ENCODE measurements at regions of chr9 and their contacts with region 1.

Region 1: GRCh38 chr9:121744002-121744686 is 92.7 kb downstream of the DAB2IP start:
- DNase-seq: no peak
- H3K4me3 ChIP-seq: peak overlapping the region; percentile 42
- CTCF ChIP-seq: peak; percentile 46

Region 2: GRCh38 chr9:121707477-121708424 is 36.4 kb before region 1 on chr9:
- CTCF ChIA-PET with region 1: no interaction called
- POLR2A ChIA-PET with region 1: no interaction called
- DNase-seq: no peak
- H3K4me3 ChIP-seq: no peak overlapping the region
- CTCF ChIP-seq: no peak

Region 3: GRCh38 chr9:121992571-121993212 is 248.5 kb after region 1 on chr9:
- CTCF ChIA-PET with region 1: interaction called, 14 read pairs
- POLR2A ChIA-PET with region 1: no interaction called
- DNase-seq: peak; percentile 21
- H3K4me3 ChIP-seq: no peak overlapping the region
- CTCF ChIP-seq: peak; percentile 55

Measured in AG04449 (cell line).